PC-3 (cell line): ENCODE measurements at regions of chr1 and their contacts with region 1.

Region 1: DNA sequence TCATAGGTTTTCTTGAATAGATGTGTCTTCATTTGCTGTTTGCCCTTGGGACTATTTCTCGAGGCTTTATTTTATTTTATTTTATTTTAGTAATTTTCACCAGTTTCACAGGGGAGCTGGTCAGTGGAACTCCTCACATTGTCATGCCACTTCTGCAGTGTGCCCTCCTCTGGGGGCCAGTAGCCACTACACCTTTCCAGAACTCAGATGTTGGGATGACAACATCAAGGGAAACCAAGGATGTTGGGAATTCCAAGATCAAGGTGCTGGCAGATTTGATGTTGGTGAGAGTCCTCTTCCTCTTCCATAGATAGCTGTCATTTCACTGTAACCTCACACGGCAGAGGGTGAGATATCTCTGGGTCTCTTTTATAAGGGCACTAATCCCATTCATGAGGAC is 35.5 kb downstream of the SLC26A9 start:
- DNase-seq: peak; percentile 74
- ATAC-seq: peak; percentile 96
- H3K4me3 ChIP-seq: no peak overlapping the region
- H3K27ac ChIP-seq: no peak overlapping the region
- H3K4me1 ChIP-seq: no peaks in the 10 kb centered on the region
- H3K27me3 ChIP-seq: peaks cover 18% of the 10 kb centered on the region
- CTCF ChIP-seq: peak; percentile 84

Region 2: GRCh38 chr1:205466595-205467181 is 441.1 kb before region 1 on chr1:
- CTCF ChIA-PET with region 1: no interaction called
- POLR2A ChIA-PET with region 1: no interaction called
- intact Hi-C with region 1: no loop called
- DNase-seq: no peak
- ATAC-seq: no peak
- H3K4me3 ChIP-seq: no peak overlapping the region
- H3K27ac ChIP-seq: no peak overlapping the region
- H3K4me1 ChIP-seq: no peaks in the 10 kb centered on the region
- H3K27me3 ChIP-seq: peaks cover 65% of the 10 kb centered on the region
- CTCF ChIP-seq: no peak

Region 3: DNA sequence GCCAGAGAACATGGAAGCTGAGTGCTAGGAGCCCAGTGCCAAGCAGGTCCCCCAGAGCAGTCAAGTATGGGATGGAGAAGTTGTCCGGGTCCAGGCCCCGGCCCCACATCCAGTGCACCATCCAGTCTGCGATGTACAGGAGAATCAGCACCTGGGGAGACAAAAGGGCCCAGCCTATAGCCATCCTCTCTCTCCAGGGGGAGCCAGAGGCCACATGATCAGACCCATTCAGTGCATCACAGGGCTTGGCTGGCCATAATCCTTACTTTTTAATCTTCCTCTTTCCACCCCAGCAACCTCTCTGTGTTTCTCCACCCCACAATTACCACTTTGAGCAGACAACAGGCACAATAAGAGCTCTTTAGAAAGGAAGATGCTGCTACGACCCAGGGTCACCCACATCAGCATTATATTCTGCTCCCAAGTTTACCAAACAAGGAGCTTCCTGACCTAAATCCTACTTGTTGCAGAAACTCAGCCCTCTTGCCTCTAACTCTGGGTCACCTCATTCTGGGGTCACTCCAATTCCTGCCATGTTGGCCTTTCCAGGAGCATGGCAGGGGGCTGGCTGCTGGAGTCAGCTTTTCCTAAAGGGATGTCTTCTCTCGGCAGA is 116.1 kb before region 1 on chr1:
- CTCF ChIA-PET with region 1: interaction called, 23 read pairs
- POLR2A ChIA-PET with region 1: no interaction called
- intact Hi-C with region 1: loop called (anchors 1 kb)
- DNase-seq: peak; percentile 77
- ATAC-seq: peak; percentile 100
- H3K4me3 ChIP-seq: no peak overlapping the region
- H3K27ac ChIP-seq: no peak overlapping the region
- H3K4me1 ChIP-seq: no peaks in the 10 kb centered on the region
- H3K27me3 ChIP-seq: no peaks in the 10 kb centered on the region
- CTCF ChIP-seq: peak; percentile 93